Tibial artery (tissue), 4 donors: ENCODE measurements at regions of chr6 and their contacts with region 1.

Region 1: GRCh38 chr6:51855310-51856082 is 231.9 kb downstream of the PKHD1 start:
- DNase-seq: no peak
- H3K4me3 ChIP-seq: no peak overlapping the region
- H3K27ac ChIP-seq: no peak overlapping the region
- H3K4me1 ChIP-seq: peaks cover 0 to 5% (median 0%) of the 10 kb centered on the region in 4 donors
- H3K27me3 ChIP-seq: peaks cover 0 to 8% of the 10 kb centered on the region in 2 donors
- CTCF ChIP-seq: peak; percentile 45 to 48

Region 2: GRCh38 chr6:52020945-52021570 is 165.6 kb after region 1 on chr6:
- intact Hi-C with region 1: loop called (anchors 5 kb)
- DNase-seq: no peak
- H3K4me3 ChIP-seq: no peak overlapping the region
- H3K27ac ChIP-seq: no peak overlapping the region
- H3K4me1 ChIP-seq: no peaks in the 10 kb centered on the region
- H3K27me3 ChIP-seq: peaks cover 0 to 7% of the 10 kb centered on the region in 2 donors
- CTCF ChIP-seq: peak; percentile 62 to 75